ENCODE measurements at regions of chr7 and their contacts with region 1.

Region 1: GRCh38 chr7:158829342-158830210 is at the start of gene ESYT2:
- DNase-seq: peak; percentile 97 to 100 (median 98)
- H3K4me3 ChIP-seq: peak within 1 kb of the TSS; percentile 49 to 97 (median 96)
- H3K27ac ChIP-seq: peak within 1 kb of the TSS; percentile 94 to 100 (median 99)
- H3K4me1 ChIP-seq: peaks cover 10 to 20% of the 10 kb centered on the region in 2 donors
- H3K27me3 ChIP-seq: no peaks in the 10 kb centered on the region
- CTCF ChIP-seq: peak in 3 of 6 experiments; percentile 11 to 27 (median 17)
- POLR2A ChIP-seq: peak; percentile 92 to 97
- total RNA-seq, gene ESYT2: 56.2 to 104 (median 91.1) TPM

Region 2: DNA sequence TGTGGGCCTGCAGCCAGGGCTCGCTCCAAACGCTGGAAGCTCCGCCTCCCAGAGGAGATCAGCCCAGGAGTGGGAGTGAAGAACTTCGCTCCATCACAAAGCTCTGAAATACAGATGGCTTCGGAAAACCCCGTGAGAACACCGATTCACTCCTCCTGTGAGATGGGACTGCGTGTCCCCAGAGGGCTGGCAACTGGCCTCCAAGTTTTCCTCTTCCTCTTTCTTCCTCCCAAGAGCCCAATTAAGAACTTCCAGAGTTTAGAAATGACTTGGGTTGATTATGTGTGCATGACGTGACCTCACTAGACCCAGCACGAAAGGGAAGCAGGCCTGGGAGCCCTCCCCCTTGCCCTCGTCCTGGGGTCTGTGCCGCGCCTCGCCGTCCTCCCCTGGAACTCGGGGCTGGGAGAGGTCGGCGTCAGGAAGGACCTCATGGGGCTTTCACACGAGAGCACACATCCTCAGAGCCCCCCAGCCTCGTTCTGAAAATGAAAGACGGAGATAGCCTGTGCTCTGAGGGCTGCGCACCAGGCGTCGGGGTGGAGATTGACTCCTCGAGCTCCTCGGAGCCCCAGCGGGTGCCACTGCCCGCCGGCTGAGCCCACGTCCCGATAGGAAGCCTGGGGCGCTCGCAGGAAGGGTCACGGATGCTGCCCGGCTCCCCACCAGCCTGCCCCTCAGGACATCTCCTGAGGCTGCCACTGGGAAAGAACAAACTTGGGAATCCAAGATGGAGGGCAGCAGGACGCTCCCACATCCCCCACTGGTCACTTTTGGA is 279.8 kb before region 1 on chr7:
- intact Hi-C with region 1: no loop called
- DNase-seq: peak in 3 of 7 donors; percentile 16 to 33 (median 16)
- H3K4me3 ChIP-seq: no peak overlapping the region
- H3K27ac ChIP-seq: no peak overlapping the region
- H3K4me1 ChIP-seq: no peaks in the 10 kb centered on the region
- H3K27me3 ChIP-seq: no peaks in the 10 kb centered on the region
- CTCF ChIP-seq: no peak
- POLR2A ChIP-seq: no peak

Region 3: DNA sequence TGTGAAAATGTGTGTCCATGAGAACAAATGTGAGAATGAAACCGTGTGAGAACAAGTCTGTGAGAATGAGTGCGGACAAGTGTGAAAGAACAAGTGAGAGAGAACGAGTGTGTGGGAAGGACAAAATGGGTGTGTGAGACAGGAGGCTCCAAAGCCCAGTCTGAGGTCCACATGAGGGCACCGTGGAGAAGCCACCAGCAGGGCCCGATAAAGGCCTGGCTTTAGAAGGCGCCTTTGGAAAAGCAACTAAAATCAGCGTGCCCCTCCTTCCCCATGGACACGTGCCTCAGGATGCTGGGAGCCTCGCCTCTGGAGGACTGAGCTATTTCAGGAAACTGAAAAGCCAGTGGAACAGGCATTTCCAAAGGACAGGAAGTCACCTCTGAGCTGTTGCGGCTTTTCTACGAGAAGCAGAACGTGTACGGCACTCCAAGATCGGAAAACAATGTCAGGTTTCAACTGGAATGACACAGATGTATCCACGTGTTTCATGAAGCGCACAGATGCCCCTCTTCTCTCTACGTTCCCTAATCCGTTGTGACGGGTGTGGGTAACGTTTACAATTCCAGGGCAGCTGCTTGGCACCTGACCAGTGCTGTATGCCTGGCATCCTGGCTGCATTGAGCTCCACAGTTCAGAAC is 46.7 kb before region 1 on chr7:
- intact Hi-C with region 1: loop called in 1 of 2 experiments (anchors 5 kb)
- DNase-seq: peak in 6 of 7 donors; percentile 36 to 76 (median 55)
- H3K4me3 ChIP-seq: no peak overlapping the region
- H3K27ac ChIP-seq: peak overlapping the region in 3 of 5 donors; percentile 5 to 64 (median 43)
- H3K4me1 ChIP-seq: peaks cover 14 to 20% of the 10 kb centered on the region in 2 donors
- H3K27me3 ChIP-seq: no peaks in the 10 kb centered on the region
- CTCF ChIP-seq: peak in 4 of 6 experiments; percentile 13 to 50 (median 32)
- POLR2A ChIP-seq: no peak

Measured in adrenal gland (tissue), 19 donors.